Panc1 (cell line): ENCODE measurements at regions of chr19 and their contacts with region 1.

Region 1: DNA sequence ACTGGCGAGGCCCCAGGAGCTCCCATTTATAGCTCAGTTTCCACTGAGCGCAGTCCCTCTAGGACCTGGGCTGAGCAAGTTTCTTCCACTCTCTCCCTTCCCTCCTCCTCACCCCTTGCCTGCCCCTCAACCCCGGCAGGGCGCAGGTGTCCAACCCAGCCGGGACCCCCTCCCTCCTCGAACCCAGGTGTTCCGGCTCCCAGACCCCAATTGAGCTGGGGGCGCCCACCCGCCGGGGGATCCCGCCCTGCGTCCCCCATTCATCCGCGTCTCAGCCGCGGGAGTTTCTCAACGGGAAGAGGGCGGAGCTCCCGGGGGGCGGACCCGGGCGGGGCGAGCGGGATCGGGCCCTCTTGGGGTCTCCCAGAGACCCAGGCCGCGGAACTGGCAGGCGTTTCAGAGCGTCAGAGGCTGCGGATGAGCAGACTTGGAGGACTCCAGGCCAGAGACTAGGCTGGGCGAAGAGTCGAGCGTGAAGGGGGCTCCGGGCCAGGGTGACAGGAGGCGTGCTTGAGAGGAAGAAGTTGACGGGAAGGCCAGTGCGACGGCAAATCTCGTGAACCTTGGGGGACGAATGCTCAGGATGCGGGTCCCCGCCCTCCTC is at the start of gene KIRREL2:
- DNase-seq: no peak
- ATAC-seq: peak; percentile 82
- H3K4me3 ChIP-seq: peak within 1 kb of the TSS; percentile 66 to 72
- H3K27ac ChIP-seq: peak within 1 kb of the TSS; percentile 62
- H3K4me1 ChIP-seq: peaks cover 6% of the 10 kb centered on the region; the same call in 1 of the 2 replicates
- H3K27me3 ChIP-seq: no peaks in the 10 kb centered on the region
- CTCF ChIP-seq: no peak
- total RNA-seq, gene KIRREL2: 5.0 TPM

Region 2: GRCh38 chr19:35757749-35758608 is 98.7 kb before region 1 on chr19 and contains the start of gene PROSER3:
- CTCF ChIA-PET with region 1: no interaction called
- POLR2A ChIA-PET with region 1: interaction called, 18 read pairs
- in situ Hi-C with region 1: no loop called
- intact Hi-C with region 1: no loop called
- DNase-seq: peak; percentile 99
- ATAC-seq: peak; percentile 97
- H3K4me3 ChIP-seq: peak within 1 kb of the TSS; percentile 95 to 99
- H3K27ac ChIP-seq: peak within 1 kb of the TSS; percentile 100
- H3K4me1 ChIP-seq: peaks cover 16% of the 10 kb centered on the region
- H3K27me3 ChIP-seq: no peaks in the 10 kb centered on the region
- CTCF ChIP-seq: no peak
- total RNA-seq, gene PROSER3: 63.9 TPM

Region 3: GRCh38 chr19:35783469-35784434 is 72.9 kb before region 1 on chr19:
- CTCF ChIA-PET with region 1: no interaction called
- POLR2A ChIA-PET with region 1: interaction called, 15 read pairs
- in situ Hi-C with region 1: no loop called
- intact Hi-C with region 1: no loop called
- DNase-seq: no peak
- ATAC-seq: no peak
- H3K4me3 ChIP-seq: no peak overlapping the region
- H3K27ac ChIP-seq: no peak overlapping the region
- H3K4me1 ChIP-seq: no peaks in the 10 kb centered on the region; the same call in 1 of the 2 replicates
- H3K27me3 ChIP-seq: no peaks in the 10 kb centered on the region
- CTCF ChIP-seq: no peak

Region 4: DNA sequence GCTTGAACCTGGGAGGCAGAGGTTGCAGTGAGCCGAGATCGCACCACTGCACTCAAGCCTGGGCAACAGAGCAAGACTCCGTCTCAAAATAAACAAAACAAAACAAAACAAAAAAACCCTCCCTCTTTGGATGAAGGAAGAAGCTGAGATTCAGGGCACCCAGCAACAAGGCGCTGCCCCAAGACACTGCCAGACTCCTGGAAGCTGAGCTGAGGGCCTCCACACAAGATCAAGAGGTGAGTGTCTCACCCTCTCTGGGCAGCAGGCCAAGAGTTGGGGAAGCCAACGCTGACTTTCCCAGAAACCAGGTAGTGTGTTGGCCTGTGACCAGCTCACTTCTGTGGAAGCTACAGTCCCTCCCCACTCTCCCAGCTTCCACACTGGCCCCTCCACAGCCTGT is 55.1 kb after region 1 on chr19:
- CTCF ChIA-PET with region 1: no interaction called
- POLR2A ChIA-PET with region 1: no interaction called
- in situ Hi-C with region 1: loop called (anchors 10 kb)
- intact Hi-C with region 1: no loop called
- DNase-seq: no peak
- ATAC-seq: peak; percentile 44
- H3K4me3 ChIP-seq: no peak overlapping the region
- H3K27ac ChIP-seq: no peak overlapping the region
- H3K4me1 ChIP-seq: no peaks in the 10 kb centered on the region
- H3K27me3 ChIP-seq: no peaks in the 10 kb centered on the region
- CTCF ChIP-seq: no peak